IMR-90 (cell line): ENCODE measurements at regions of chr5 and their contacts with region 1.

Region 1: DNA sequence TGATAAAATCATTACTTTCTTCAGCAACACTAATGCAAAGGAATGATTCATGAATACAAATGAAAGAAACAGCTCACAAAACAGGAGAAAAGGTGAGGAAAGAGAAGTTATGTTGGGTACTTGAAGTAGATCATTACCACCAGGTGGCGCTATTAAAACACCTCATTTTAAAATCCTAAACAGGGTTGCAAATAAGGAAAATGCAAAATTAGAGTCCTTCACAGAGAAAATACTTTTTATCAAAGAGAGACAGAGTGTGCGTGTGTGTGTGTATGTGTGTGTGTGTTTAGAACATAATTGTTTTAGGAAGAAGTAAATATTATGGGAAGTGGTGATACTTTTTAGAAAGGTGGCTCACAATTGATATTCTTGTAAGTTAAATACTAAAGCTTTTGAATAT is 49.5 kb upstream of the CD180 start:
- DNase-seq: peak; percentile 82
- ATAC-seq: peak; percentile 73
- H3K4me3 ChIP-seq: no peak overlapping the region
- H3K27ac ChIP-seq: no peak overlapping the region
- H3K4me1 ChIP-seq: no peaks in the 10 kb centered on the region; the same call in 1 of the 2 replicates
- H3K27me3 ChIP-seq: no peaks in the 10 kb centered on the region
- CTCF ChIP-seq: peak; percentile 72
- POLR2A ChIP-seq: no peak
- RAD21 ChIP-seq: peak; percentile 81

Region 2: GRCh38 chr5:67338421-67338820 is 92.3 kb after region 1 on chr5:
- CTCF ChIA-PET with region 1: no interaction called
- POLR2A ChIA-PET with region 1: no interaction called
- dilution Hi-C with region 1: no loop called
- in situ Hi-C with region 1: no loop called
- intact Hi-C with region 1: no loop called
- DNase-seq: no peak
- ATAC-seq: no peak
- H3K4me3 ChIP-seq: no peak overlapping the region
- H3K27ac ChIP-seq: no peak overlapping the region
- H3K4me1 ChIP-seq: no peaks in the 10 kb centered on the region
- H3K27me3 ChIP-seq: no peaks in the 10 kb centered on the region; the same call in none of the 2 replicates
- CTCF ChIP-seq: no peak
- POLR2A ChIP-seq: no peak
- RAD21 ChIP-seq: no peak

Region 3: DNA sequence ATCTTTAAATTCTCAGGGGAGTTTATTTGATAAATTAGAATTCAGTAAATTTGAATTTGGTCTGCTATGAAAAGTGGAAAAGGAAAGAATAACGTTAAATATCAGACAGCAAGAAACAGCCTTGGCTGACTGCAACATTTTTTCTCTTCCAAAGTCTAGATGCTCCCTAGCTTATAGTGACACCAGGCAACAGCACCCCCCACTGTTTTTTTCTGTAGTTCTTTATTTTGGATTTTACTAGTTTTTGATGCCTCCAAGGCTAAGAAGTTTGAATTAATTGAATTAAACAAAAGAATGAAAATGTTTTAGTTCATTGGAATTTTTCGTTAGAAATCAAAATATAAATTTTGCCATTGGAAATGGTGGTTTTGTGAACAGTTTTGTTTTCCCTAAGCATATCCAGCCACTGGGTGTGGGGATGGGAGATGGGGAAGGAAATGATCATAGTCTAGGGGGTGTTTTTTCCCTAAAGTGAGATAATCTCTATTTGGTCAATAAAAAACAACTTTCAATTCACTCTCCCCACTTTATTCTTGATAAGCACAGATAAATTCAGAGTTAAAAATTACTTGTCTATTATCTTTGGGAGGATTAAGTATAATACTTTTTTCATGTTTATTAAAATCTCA is 149.8 kb after region 1 on chr5:
- CTCF ChIA-PET with region 1: no interaction called
- POLR2A ChIA-PET with region 1: no interaction called
- dilution Hi-C with region 1: no loop called
- in situ Hi-C with region 1: no loop called
- intact Hi-C with region 1: loop called (anchors 5 kb)
- DNase-seq: no peak
- ATAC-seq: no peak
- H3K4me3 ChIP-seq: no peak overlapping the region
- H3K27ac ChIP-seq: no peak overlapping the region
- H3K4me1 ChIP-seq: no peaks in the 10 kb centered on the region
- H3K27me3 ChIP-seq: no peaks in the 10 kb centered on the region
- CTCF ChIP-seq: no peak
- POLR2A ChIP-seq: no peak
- RAD21 ChIP-seq: no peak

Region 4: DNA sequence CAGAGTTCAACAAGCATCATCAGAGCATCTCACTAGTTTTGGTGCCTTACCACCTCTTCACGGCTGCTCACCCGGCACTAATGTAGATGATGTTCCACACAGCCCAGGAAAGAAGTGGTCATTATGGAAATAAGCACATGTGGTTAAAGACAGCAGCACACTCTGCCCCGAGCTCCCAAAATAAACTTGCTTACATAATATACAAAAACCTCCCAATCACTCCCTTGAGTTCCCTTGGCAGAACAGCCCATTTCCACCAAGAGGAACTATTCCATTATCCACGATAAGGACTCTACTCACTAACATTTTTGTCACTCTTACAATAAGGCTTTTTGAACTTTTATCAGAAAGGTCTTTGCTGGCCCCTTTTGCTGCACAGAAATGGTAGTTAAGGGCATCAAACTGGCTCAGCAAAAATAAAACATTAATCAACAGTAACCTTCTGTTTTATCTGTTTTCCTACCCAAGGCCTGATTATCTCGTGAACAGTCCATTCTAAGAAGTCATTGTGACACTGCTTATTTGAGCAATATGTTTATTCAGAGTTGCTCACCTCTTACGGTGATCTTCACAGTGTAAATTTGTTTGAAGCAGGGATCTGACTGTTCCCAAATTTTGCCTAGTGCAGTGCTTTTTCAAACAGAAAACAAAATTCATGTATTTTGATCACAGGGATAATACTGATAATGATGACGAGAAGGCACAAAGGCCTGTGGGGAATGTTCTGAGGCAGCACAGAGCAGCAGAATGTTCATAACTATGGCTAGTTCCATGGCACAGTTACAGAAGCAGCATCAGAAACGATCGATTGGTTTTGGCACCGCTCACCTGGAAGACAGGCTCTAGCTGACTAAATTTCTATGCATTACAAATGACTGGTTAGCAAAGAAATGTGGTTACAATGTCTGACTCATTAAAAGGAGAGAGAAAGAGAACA is 569.6 kb after region 1 on chr5:
- CTCF ChIA-PET with region 1: no interaction called
- POLR2A ChIA-PET with region 1: no interaction called
- dilution Hi-C with region 1: no loop called
- in situ Hi-C with region 1: loop called (anchors 25 kb)
- intact Hi-C with region 1: no loop called
- DNase-seq: no peak
- ATAC-seq: no peak
- H3K4me3 ChIP-seq: no peak overlapping the region
- H3K27ac ChIP-seq: no peak overlapping the region
- H3K4me1 ChIP-seq: no peaks in the 10 kb centered on the region
- H3K27me3 ChIP-seq: no peaks in the 10 kb centered on the region
- CTCF ChIP-seq: no peak
- POLR2A ChIP-seq: no peak
- RAD21 ChIP-seq: no peak

Region 5: GRCh38 chr5:67855523-67855922 is 609.4 kb after region 1 on chr5:
- CTCF ChIA-PET with region 1: no interaction called
- POLR2A ChIA-PET with region 1: no interaction called
- dilution Hi-C with region 1: no loop called
- in situ Hi-C with region 1: no loop called
- intact Hi-C with region 1: loop called (anchors 10 kb)
- DNase-seq: no peak
- ATAC-seq: no peak
- H3K4me3 ChIP-seq: no peak overlapping the region
- H3K27ac ChIP-seq: no peak overlapping the region
- H3K4me1 ChIP-seq: no peaks in the 10 kb centered on the region
- H3K27me3 ChIP-seq: no peaks in the 10 kb centered on the region
- CTCF ChIP-seq: no peak
- POLR2A ChIP-seq: no peak
- RAD21 ChIP-seq: no peak